ENCODE measurements at regions of chr1 and their contacts with region 1.

Region 1: GRCh38 chr1:8848663-8849386 is 29.7 kb downstream of the ENO1 start:
- DNase-seq: peak; percentile 96
- H3K4me3 ChIP-seq: no peak overlapping the region
- H3K27ac ChIP-seq: no peak overlapping the region
- H3K4me1 ChIP-seq: 0 out of 2 replicates have a peak, but pooled peaks cover 4% of the 10 kb centered on the region
- H3K27me3 ChIP-seq: no peaks in the 10 kb centered on the region

Region 2: GRCh38 chr1:8560611-8561544 is 287.9 kb before region 1 on chr1:
- in situ Hi-C with region 1: loop called (anchors 25 kb)
- DNase-seq: peak; percentile 75
- H3K4me3 ChIP-seq: no peak overlapping the region
- H3K27ac ChIP-seq: no peak overlapping the region
- H3K4me1 ChIP-seq: peaks cover 20% of the 10 kb centered on the region
- H3K27me3 ChIP-seq: no peaks in the 10 kb centered on the region

Region 3: DNA sequence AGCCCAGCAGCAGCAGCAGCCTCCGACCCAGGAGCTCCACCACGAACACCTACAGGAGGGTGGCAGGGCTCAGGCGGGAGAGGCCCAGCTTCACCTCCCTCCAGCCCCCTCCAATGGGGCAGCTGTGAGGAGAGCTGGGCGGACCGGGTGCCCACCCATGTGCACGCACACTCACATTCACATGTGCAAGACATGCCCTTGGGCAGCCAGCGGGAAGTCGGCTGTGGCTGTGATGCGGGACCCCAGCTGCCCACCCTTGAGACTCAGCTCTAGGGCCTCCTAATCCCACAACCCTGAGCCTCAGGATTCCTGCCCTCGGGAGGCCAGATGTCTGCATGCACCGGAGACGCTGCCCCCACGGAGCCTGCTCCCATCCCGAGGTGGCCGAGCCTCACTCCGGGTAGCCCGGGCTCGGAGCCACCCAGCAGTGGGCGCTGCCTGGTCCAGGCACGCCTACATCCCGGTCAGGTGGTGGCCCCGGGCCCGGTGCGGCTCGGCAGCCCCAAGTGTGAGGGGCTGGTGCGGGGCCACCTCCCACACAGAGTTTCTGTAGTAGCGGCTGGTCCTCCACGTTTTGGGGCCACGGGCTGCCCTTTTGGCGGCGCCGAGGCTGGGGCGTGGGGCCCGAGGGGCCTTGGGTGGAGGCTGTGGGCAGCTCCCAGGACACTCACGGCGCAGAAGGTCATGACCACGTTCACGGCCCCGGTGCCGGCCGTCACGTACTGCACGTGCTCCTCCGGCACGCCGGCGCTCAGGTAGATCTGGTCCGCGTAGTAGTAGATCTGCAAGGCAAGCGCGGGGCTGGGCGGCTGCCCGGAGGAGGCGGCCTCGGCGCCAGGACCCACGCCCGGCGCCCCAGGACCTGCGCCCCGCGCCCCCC is 190.3 kb after region 1 on chr1:
- in situ Hi-C with region 1: no loop called
- DNase-seq: peak; percentile 16
- H3K4me3 ChIP-seq: peak overlapping the region; percentile 37
- H3K27ac ChIP-seq: no peak overlapping the region
- H3K4me1 ChIP-seq: no peaks in the 10 kb centered on the region
- H3K27me3 ChIP-seq: peaks cover 19% of the 10 kb centered on the region